Posterior vena cava (tissue), 2 donors: ENCODE measurements at regions of chr12 and their contacts with region 1.

Region 1: GRCh38 chr12:67173258-67173657 is 95.9 kb upstream of the CAND1 start:
- DNase-seq: no peak

Region 2: DNA sequence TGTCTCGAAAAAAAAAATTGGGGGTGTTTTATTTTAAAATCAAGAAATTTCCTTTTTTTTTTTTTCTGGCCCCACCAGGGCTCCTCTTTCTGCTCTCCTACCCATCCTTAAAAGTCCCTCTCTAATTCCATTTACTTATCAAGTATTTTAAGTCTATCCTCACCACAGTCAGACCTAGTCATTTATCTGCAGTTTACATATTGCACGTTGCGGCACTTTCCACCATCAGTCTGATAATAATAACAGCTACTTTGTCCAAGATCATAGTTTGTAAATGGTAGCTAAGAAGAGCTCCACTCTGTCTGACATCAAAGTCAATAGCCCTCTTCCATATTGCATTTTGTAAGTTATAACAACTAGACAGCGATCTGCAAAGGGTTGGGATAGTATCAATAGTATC is 72.3 kb after region 1 on chr12:
- intact Hi-C with region 1: loop called in 1 of 2 experiments (anchors 2 kb)
- DNase-seq: no peak